ENCODE measurements at regions of chr17 and their contacts with region 1.

Region 1: GRCh38 chr17:74224959-74225725 is 11.8 kb downstream of the TTYH2 start:
- DNase-seq: no peak
- H3K4me3 ChIP-seq: no peak overlapping the region
- H3K27ac ChIP-seq: no peak overlapping the region
- H3K4me1 ChIP-seq: no peaks in the 10 kb centered on the region
- H3K27me3 ChIP-seq: no peaks in the 10 kb centered on the region
- CTCF ChIP-seq: no peak
- POLR2A ChIP-seq: no peak

Region 2: DNA sequence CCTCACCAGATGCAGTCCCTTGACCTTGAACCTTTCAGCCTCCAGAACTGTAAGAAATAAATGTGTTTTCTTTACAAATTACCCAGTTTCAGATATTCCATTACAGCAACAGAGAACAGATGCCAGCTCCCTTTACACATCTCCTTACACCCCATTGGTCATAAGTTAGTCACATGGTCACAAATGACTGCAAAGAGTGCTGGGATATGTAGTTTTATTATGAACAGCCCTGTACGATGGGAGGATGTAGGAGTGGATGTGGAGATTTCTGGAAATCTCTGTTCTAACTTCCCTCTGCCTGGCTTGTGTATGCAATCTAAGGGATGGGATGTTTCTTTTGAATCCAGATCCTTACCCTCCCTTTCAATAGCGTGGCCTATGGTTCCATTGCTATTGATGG is 35.0 kb before region 1 on chr17:
- intact Hi-C with region 1: no loop called
- DNase-seq: no peak
- H3K4me3 ChIP-seq: no peak overlapping the region
- H3K27ac ChIP-seq: no peak overlapping the region
- H3K4me1 ChIP-seq: peaks cover 6% of the 10 kb centered on the region
- H3K27me3 ChIP-seq: no peaks in the 10 kb centered on the region
- CTCF ChIP-seq: no peak
- POLR2A ChIP-seq: no peak

Region 3: GRCh38 chr17:74759243-74759801 is 534.2 kb after region 1 on chr17:
- intact Hi-C with region 1: loop called (anchors 5 kb)
- DNase-seq: no peak
- H3K4me3 ChIP-seq: no peak overlapping the region
- H3K27ac ChIP-seq: peak overlapping the region; percentile 90 to 91
- H3K4me1 ChIP-seq: peaks cover 60% of the 10 kb centered on the region
- H3K27me3 ChIP-seq: no peaks in the 10 kb centered on the region
- CTCF ChIP-seq: no peak
- POLR2A ChIP-seq: no peak